Calu3 (cell line): ENCODE measurements at regions of chr17 and their contacts with region 1.

Region 1: DNA sequence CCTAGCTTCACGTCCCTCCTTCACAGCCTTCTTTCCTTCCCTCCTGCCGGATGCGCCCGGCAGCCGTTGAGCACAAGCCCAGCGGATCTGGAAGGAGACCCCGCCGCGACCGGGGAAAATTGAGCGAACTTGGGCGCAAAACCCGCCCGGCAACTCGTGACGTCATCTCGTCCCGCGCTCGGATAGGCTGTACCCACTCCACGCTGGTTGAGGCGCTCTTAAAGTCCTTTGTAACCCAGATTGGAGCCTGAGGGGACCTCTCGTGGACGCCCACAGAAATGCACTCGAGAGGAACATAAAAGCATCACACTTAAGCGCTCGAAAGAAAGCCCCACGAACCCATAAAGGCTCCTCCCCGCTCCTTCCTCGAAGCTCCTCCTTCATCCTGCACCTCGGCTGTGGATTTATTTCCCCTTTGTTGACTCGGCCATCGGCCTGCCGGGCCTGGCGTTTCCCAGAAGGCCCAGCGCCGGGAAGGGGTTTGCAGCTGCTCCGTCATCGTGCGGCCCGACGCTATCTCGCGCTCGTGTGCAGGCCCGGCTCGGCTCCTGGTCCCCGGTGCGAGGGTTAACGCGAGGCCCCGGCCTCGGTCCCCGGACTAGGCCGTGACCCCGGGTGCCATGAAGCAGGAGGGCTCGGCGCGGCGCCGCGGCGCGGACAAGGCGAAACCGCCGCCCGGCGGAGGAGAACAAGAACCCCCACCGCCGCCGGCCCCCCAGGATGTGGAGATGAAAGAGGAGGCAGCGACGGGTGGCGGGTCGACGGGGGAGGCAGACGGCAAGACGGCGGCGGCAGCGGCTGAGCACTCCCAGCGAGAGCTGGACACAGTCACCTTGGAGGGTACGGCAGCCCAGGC is at the start of gene PSMD3:
- DNase-seq: peak; percentile 100
- H3K4me3 Mint-ChIP-seq: peak within 1 kb of the TSS; percentile 77
- H3K27ac Mint-ChIP-seq: peak within 1 kb of the TSS; percentile 81
- H3K4me1 Mint-ChIP-seq: peaks cover 26% of the 10 kb centered on the region
- H3K27me3 Mint-ChIP-seq: peaks cover 43% of the 10 kb centered on the region
- CTCF ChIP-seq: no peak
- total RNA-seq, gene PSMD3: 2,152 and 2,179 TPM in 2 replicates

Region 2: DNA sequence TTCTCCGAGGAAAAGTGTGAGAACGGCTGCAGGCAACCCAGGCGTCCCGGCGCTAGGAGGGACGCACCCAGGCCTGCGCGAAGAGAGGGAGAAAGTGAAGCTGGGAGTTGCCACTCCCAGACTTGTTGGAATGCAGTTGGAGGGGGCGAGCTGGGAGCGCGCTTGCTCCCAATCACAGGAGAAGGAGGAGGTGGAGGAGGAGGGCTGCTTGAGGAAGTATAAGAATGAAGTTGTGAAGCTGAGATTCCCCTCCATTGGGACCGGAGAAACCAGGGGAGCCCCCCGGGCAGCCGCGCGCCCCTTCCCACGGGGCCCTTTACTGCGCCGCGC is 280.8 kb before region 1 on chr17 and contains the start of gene ERBB2:
- CTCF ChIA-PET with region 1: interaction called, 8,195 read pairs
- intact Hi-C with region 1: loop called (anchors 1 kb)
- DNase-seq: peak; percentile 100
- H3K4me3 Mint-ChIP-seq: peak within 1 kb of the TSS; percentile 71
- H3K27ac Mint-ChIP-seq: peak within 1 kb of the TSS; percentile 67
- H3K4me1 Mint-ChIP-seq: peaks cover 68% of the 10 kb centered on the region
- H3K27me3 Mint-ChIP-seq: no peaks in the 10 kb centered on the region
- CTCF ChIP-seq: no peak
- total RNA-seq, gene ERBB2: 4,829 and 4,830 TPM in 2 replicates

Region 3: DNA sequence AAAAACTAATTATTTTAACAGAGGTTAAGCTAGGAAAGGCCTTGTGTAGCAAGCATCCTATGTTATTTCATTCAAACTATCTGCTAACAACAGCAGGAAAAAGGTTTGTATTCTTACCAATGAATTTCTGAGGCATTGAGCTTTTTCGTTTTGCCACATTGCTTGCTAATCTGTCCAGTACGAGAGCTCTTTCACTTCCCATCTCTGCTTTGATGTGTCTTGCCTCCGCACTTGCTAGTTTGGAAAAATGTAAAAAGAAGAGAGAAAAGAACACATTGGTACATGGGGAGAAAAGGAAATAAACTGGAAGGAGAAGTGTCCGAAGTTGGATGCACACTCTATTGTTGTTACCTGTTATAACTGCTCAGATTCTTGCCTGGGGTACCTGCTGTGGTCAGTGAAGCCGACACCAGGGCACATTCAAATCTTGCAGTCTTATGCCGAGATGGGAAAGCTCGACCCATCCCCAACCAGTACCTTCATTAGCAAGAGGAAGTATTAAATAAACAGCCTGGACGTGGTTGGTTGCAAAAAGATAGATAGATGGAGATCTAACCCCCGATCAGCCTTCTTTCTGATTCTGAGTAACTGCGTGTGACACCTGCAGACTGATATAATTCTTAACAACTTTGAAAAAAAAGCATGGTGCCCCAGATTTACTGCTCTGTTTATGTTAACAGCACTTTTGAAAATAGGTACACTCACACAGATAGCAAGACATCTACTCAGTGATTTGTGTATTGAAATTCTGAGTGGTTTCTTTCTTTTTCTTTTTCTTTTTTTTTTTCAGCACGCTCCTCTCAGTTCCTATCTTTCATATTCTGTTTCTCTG is 202.8 kb before region 1 on chr17:
- CTCF ChIA-PET with region 1: interaction called, 978 read pairs
- intact Hi-C with region 1: loop called (anchors 1 kb)
- DNase-seq: no peak
- H3K4me3 Mint-ChIP-seq: no peak overlapping the region
- H3K27ac Mint-ChIP-seq: no peak overlapping the region
- H3K4me1 Mint-ChIP-seq: peaks cover 48% of the 10 kb centered on the region
- H3K27me3 Mint-ChIP-seq: no peaks in the 10 kb centered on the region
- CTCF ChIP-seq: no peak

Region 4: DNA sequence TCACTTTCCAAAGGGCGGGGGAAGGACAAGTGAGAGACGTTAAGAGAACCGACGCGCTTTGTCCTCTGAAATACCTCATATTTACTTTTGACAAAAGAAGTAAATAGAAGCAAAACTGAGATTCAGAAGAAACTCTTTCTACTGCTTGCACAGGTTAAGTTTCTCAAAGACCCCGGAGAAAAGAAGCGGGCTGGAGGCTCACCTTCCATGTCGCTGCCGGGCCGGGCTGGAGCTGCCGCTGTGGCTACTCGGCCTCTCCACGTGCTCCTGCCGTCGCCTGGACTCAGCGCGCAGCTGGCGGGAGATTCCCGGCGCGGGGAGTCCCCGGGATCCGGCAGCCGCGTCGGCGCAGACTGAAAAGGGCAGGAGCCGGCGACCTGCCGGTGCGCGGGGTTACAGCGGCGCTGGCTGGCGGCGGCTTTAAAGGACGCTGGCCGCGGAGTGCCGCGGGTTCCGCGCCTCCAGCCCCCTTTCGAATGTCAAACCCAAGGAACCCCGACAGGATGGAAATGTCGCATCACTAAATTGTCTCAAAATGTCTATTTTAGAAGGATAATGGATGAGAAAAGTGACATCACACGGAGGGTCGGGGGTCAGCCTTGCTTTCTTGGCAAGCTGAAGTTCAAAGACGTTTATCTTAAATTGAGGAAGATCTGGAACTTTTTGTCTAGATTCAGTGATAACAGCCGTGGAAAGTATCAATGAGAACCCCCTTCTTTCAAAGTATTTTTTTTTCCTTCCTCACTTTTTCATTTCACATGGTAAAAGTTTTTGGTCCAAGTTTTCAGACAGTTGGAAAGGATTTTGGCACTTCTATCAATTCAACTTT is 116.4 kb before region 1 on chr17 and contains the start of gene IKZF3:
- CTCF ChIA-PET with region 1: interaction called, 45 read pairs
- intact Hi-C with region 1: no loop called
- DNase-seq: peak; percentile 100
- H3K4me3 Mint-ChIP-seq: peak within 1 kb of the TSS; percentile 67
- H3K27ac Mint-ChIP-seq: peak within 1 kb of the TSS; percentile 31
- H3K4me1 Mint-ChIP-seq: peaks cover 38% of the 10 kb centered on the region
- H3K27me3 Mint-ChIP-seq: peaks cover 53% of the 10 kb centered on the region
- CTCF ChIP-seq: no peak
- total RNA-seq, gene IKZF3: 30.9 and 41.0 TPM in 2 replicates

Region 5: DNA sequence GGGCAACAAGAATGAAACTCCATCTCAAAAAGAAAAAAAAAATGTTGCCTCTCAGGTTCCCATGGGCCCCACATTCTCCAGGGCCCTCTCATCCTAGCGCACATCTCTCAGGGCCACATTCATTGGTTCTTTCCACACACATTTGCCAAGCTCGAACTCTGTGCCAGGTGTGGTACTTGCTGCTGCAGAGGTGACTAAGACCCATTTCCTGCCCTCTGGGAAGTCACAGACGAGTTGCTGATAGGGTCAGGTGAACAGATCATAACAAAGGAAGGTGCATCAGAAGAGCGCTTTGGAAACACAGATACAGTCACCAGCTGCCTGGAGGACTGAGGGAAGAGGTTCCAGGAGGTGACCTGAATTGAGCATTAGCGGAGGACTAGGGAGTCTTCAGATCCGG is 16.8 kb before region 1 on chr17:
- CTCF ChIA-PET with region 1: interaction called, 4,038 read pairs
- intact Hi-C with region 1: loop called (anchors 1 kb)
- DNase-seq: peak; percentile 94
- H3K4me3 Mint-ChIP-seq: no peak overlapping the region
- H3K27ac Mint-ChIP-seq: peak overlapping the region; percentile 0
- H3K4me1 Mint-ChIP-seq: peaks cover 45% of the 10 kb centered on the region
- H3K27me3 Mint-ChIP-seq: peaks cover 32% of the 10 kb centered on the region
- CTCF ChIP-seq: no peak

Region 6: GRCh38 chr17:40139566-40140058 is 159.0 kb after region 1 on chr17:
- CTCF ChIA-PET with region 1: interaction called, 13 read pairs
- intact Hi-C with region 1: no loop called
- DNase-seq: peak; percentile 72
- H3K4me3 Mint-ChIP-seq: peak overlapping the region; percentile 98
- H3K27ac Mint-ChIP-seq: peak overlapping the region; percentile 98
- H3K4me1 Mint-ChIP-seq: peaks cover 45% of the 10 kb centered on the region
- H3K27me3 Mint-ChIP-seq: no peaks in the 10 kb centered on the region
- CTCF ChIP-seq: no peak

Region 7: DNA sequence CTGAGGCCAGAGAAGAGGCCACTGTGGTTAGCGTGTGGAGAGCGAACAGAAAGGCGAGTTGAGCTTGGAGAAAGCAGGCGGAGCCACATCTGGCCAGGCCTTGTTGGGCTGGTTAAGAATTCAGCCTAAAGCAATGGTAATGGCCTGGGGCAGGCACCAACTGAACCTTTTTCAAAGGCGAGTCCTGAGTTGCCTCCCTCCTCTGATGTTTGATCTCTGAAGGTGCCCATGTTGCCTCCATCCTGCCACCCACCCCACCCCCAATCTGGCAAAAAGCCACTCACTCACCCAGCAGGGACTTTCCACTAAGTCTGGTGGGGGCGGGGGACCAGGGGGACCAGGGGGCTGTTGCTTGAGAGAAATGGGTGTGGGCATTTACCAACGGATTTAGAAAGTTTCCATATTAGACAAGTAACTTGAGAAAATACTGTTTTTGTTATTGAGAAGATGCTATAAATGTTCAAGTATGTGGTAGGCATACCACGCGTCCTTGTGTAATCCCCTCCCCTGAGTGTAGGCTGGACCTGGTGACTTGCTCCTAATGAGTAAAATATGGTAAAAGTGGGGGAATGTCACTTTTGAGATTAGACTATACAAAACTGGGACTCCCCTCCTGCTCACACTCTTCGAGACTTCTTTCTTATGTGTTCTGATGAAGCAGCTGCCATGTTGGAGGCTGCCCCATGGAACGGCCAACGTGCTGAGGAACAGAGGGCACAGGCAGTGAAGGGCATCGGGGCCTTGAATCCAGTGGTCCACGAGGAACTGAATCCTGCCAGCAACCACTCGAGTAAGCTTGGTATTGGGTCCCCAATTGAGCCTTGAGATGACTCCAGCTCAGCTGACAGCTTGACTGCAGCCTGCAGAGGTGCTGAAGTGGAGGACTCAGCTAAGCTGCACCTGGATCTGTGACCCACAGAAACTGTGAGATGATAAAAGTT is 550.7 kb after region 1 on chr17:
- CTCF ChIA-PET with region 1: interaction called, 29 read pairs
- intact Hi-C with region 1: no loop called
- DNase-seq: no peak
- H3K4me3 Mint-ChIP-seq: no peak overlapping the region
- H3K27ac Mint-ChIP-seq: no peak overlapping the region
- H3K4me1 Mint-ChIP-seq: peaks cover 19% of the 10 kb centered on the region
- H3K27me3 Mint-ChIP-seq: peaks cover 48% of the 10 kb centered on the region
- CTCF ChIP-seq: no peak